H1 (cell line): ENCODE measurements at regions of chr7 and their contacts with region 1.

Region 1: DNA sequence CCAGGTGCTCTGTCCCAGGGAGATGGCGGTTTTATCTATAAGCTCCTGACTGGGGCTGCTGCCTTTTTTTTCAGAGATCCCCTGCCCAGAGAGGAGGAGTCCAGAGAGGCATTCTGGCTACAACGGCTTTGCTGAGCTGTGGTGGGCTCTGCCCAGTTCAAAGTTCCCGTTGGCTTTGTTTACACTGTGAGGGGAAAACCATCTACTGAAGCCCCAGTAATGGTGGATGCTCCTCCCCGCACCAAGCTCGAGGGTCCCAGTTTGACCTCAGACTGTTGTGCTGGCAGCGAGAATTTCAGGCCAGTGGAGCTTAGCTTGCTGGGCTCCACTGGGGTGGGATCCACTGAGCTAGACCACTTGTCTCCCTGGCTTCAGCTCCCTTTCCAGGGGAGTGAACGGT is 16.4 kb upstream of the SLC26A5 start:
- DNase-seq: no peak
- H3K4me3 ChIP-seq: no peak overlapping the region
- H3K27ac ChIP-seq: no peak overlapping the region
- H3K4me1 ChIP-seq: no peaks in the 10 kb centered on the region
- H3K27me3 ChIP-seq: no peaks in the 10 kb centered on the region
- CTCF ChIP-seq: no peak
- EP300 ChIP-seq: no peak
- POLR2A ChIP-seq: no peak
- RAD21 ChIP-seq: no peak

Region 2: DNA sequence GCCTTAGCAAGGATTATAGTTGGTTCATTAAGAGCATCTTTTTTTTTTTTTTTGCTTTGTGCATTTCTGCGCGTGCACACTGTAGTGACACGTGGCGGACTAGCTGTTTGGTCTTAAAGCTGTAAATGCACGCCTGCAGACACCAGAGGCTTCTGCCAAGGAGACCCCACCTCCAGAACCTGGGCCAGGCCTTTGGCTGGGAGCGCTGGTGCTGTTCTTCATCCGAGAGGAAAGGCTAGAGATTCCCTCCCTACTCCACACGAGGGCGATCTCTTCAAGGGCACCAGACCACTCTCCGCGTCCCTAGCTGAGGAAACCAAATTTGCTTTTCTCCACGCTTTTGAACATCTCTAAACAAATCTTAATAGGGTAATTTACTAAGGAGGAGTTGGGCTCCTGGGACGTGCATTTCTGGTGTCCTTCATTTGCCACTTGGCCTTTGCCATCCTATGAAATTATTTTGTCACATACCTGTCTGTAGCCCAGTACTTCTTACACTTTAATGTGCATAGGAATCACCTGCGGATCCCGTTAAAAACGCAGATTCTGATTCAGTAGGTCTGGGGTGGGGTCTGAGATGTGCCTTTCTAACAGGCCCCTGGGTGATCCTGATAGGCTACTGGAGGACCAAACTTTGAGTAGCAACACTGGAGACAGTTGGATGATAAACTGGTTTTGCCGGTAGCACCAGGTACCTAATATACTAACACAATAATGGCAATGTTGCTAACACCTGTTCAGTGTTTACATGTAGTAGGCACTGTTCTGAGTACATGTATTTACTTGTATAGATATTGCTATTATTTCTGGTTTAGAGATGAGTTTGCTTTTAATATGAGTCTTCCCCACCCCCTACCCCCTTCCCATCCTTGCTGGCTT is 15.0 kb before region 1 on chr7:
- CTCF ChIA-PET with region 1: interaction called, 13 read pairs
- POLR2A ChIA-PET with region 1: no interaction called
- DNase-seq: peak; percentile 34 to 74
- H3K4me3 ChIP-seq: no peak overlapping the region
- H3K27ac ChIP-seq: no peak overlapping the region
- H3K4me1 ChIP-seq: peaks cover 0 to 6% (median 4%) of the 10 kb centered on the region in 4 experiments; a peak in 5 of 7 replicates
- H3K27me3 ChIP-seq: peaks cover 1 to 38% (median 28%) of the 10 kb centered on the region in 4 experiments
- CTCF ChIP-seq: peak; percentile 83 to 94 (median 84)
- EP300 ChIP-seq: no peak
- POLR2A ChIP-seq: no peak
- RAD21 ChIP-seq: peak; percentile 91 to 92